ENCODE measurements at regions of chr10 and their contacts with region 1.

Region 1: DNA sequence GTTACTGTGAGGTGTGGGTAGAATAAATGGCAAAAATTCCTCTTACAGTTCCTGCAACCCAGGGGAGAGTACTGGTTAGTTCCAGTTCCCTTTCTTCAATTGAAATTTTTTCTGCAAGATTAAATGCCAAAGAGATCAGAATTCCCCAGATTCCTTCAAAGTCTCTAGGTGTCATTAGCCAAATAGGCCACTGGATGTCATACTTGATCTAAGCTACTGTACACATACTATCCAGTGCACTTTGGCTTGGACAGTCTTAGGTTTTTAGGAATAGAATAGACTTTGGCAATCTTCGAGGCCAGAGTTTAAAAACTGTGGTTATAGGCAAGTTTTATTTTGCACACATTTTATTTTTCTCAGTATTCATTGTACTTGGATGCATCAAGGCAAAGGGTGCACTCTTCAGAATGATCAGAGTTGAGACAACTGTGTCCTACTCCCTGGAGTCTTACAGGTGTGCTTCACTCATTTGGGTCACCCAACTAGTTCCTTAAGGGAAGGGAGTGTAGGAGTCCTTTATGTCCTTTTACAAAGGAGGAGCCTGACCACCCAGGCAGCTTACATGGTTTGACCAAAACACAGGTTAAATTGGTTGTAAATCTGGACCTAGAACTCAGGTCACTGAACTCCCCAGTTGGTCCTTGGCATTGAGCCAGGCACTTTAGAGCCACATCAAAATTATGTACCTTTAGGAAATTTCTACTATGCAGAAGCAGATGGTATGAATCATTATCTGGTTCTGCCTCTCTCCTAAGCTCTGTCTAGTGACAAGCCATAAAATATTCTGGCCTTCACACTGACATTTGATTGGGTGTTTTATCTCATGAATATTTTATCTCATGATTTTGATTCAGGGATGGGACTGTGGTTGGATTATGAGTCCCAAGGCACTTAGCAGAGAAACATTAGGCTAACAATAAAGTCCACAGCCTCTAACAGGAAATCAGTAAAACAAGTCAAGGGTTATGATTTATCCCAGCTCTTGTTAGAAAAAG is 49.5 kb downstream of the ASAH2B start:
- DNase-seq: peak; percentile 59
- H3K4me3 Mint-ChIP-seq: no peak overlapping the region
- H3K27ac Mint-ChIP-seq: no peak overlapping the region
- H3K4me1 Mint-ChIP-seq: no peaks in the 10 kb centered on the region
- H3K27me3 Mint-ChIP-seq: peaks cover 33% of the 10 kb centered on the region
- CTCF ChIP-seq: peak; percentile 58

Region 2: DNA sequence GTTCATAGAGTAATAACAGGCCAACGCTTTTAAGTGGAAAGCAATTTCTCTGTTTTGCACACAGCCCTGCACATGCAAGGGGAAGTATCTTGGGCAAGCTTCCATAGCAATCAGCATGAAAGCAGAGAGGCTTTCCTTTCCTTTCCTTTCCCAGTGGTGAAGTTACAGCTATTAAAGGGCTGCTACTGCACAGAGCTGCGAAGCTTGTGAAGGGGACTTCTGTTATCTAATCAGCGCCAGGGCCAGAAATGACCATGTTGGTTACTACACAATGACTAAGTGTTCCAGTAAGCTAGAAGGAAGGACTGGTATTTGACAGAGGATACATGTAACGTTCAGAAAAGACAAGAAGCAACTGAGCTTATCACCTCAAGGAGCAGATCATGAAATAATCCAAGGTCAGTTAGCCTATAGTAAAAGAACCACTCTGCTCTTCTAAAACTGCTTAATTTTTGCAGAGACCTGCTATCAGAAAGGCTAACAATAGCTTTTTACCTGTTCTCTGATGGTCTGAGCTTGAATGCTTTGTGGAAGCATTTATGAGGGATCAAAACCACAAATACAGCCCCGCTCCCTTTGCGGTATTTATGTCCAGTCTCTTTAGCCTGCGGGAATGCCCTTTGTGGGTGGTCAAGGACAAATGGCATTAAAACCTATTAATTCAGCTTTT is 211.4 kb before region 1 on chr10:
- CTCF ChIA-PET with region 1: no interaction called
- POLR2A ChIA-PET with region 1: no interaction called
- intact Hi-C with region 1: no loop called
- DNase-seq: no peak
- H3K4me3 Mint-ChIP-seq: no peak overlapping the region
- H3K27ac Mint-ChIP-seq: no peak overlapping the region
- H3K4me1 Mint-ChIP-seq: peaks cover 23% of the 10 kb centered on the region
- H3K27me3 Mint-ChIP-seq: no peaks in the 10 kb centered on the region
- CTCF ChIP-seq: no peak

Region 3: DNA sequence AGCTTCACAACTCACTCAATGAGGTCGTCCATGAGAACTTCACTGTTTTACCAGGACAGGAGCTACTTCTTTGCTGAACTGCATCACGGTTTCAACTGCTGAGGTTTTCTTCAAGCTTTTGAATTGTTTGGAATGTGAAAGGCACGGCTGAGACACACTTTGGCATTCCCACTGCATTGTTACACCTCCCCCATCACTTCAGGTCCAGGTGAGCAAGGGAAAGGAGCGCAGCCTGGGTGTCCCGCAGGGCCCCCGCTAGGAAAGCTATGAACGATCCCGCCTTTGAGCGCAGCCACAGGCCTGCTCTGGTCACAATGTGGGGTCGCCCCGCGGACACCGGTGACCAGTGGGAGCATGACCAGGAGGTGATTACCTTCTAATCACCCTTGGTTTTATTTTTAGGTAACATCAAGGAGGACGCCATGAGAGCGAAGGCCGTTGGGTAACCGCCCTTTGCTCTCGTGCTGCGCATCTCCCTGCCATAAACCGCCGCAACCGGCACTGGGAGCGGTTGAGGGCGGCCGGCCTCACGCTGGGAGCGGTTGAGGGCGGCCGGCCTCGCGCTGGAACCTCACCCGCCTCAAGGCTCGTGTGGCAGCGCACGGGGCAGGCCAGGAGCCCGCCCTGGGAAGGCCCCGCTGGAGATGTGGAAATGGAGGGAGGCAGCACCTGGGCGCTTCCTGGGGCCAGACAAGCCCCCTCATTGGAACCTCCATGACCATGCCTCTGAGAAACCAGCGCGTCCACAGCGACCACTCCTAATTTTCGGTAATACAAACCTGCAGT is 114.6 kb before region 1 on chr10:
- CTCF ChIA-PET with region 1: no interaction called
- POLR2A ChIA-PET with region 1: no interaction called
- intact Hi-C with region 1: no loop called
- DNase-seq: no peak
- H3K4me3 Mint-ChIP-seq: no peak overlapping the region
- H3K27ac Mint-ChIP-seq: no peak overlapping the region
- H3K4me1 Mint-ChIP-seq: no peaks in the 10 kb centered on the region
- H3K27me3 Mint-ChIP-seq: no peaks in the 10 kb centered on the region
- CTCF ChIP-seq: no peak

Region 4: GRCh38 chr10:50896721-50897120 is 107.5 kb after region 1 on chr10:
- CTCF ChIA-PET with region 1: interaction called, 3 read pairs
- POLR2A ChIA-PET with region 1: no interaction called
- intact Hi-C with region 1: loop called (anchors 1 kb)
- DNase-seq: no peak
- H3K4me3 Mint-ChIP-seq: no peak overlapping the region
- H3K27ac Mint-ChIP-seq: no peak overlapping the region
- H3K4me1 Mint-ChIP-seq: no peaks in the 10 kb centered on the region
- H3K27me3 Mint-ChIP-seq: peaks cover 66% of the 10 kb centered on the region
- CTCF ChIP-seq: no peak

Region 5: DNA sequence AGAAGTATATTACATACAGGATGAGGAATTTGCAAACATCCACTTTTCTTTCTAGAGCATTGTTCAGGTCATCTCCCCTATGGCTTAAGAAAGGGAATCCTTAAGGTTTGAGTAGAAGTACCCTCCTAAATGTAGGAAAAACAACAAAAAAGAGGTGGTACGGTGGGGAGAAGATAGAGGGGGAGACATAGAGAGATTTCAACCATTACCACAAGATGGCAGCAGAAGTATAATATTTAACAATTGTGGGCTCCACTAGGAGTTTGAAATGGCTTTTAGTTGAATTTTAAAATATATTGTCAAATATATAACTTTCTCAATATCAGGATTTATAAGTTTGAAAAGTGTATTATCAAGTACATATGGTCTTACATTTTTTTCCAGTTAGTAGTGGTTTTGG is 212.3 kb after region 1 on chr10:
- CTCF ChIA-PET with region 1: no interaction called
- POLR2A ChIA-PET with region 1: no interaction called
- intact Hi-C with region 1: loop called (anchors 2 kb)
- DNase-seq: peak; percentile 32
- H3K4me3 Mint-ChIP-seq: no peak overlapping the region
- H3K27ac Mint-ChIP-seq: no peak overlapping the region
- H3K4me1 Mint-ChIP-seq: no peaks in the 10 kb centered on the region
- H3K27me3 Mint-ChIP-seq: peaks cover 67% of the 10 kb centered on the region
- CTCF ChIP-seq: peak; percentile 46

Measured in MCF 10A (cell line).